Uterus (tissue), 4 donors: ENCODE measurements at regions of chr16 and their contacts with region 1.

Region 1: GRCh38 chr16:27748868-27749546 is 199.1 kb downstream of the KATNIP start:
- DNase-seq: peak; percentile 30 to 42
- H3K4me3 ChIP-seq: no peak overlapping the region
- H3K27ac ChIP-seq: no peak overlapping the region
- H3K4me1 ChIP-seq: no peaks in the 10 kb centered on the region
- H3K27me3 ChIP-seq: no peaks in the 10 kb centered on the region
- CTCF ChIP-seq: peak in 3 of 4 experiments; percentile 5 to 26 (median 19)
- POLR2A ChIP-seq: no peak

Region 2: DNA sequence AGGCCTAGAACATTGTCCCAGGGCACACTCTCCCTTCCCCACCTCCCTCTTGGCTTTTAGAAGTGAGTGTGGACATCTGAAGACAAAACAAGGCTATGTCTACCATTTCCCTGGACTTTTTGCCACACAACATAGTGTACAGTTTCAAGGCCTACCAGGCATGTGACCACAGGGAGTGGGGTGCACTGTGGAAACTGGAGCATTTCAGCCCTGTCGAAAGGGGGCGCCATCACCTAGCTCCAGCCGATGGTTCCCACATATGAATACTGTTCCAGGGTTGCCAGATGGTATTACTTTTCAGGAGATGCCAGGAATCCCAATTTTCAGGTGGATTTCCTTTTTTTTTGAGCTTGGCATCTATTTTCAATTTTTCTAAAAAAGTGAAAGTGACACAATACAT is 58.4 kb before region 1 on chr16:
- intact Hi-C with region 1: loop called (anchors 10 kb)
- DNase-seq: no peak
- H3K4me3 ChIP-seq: no peak overlapping the region
- H3K27ac ChIP-seq: no peak overlapping the region
- H3K4me1 ChIP-seq: no peaks in the 10 kb centered on the region
- H3K27me3 ChIP-seq: no peaks in the 10 kb centered on the region
- CTCF ChIP-seq: peak in 2 of 4 experiments; percentile 12 to 20
- POLR2A ChIP-seq: no peak

Region 3: DNA sequence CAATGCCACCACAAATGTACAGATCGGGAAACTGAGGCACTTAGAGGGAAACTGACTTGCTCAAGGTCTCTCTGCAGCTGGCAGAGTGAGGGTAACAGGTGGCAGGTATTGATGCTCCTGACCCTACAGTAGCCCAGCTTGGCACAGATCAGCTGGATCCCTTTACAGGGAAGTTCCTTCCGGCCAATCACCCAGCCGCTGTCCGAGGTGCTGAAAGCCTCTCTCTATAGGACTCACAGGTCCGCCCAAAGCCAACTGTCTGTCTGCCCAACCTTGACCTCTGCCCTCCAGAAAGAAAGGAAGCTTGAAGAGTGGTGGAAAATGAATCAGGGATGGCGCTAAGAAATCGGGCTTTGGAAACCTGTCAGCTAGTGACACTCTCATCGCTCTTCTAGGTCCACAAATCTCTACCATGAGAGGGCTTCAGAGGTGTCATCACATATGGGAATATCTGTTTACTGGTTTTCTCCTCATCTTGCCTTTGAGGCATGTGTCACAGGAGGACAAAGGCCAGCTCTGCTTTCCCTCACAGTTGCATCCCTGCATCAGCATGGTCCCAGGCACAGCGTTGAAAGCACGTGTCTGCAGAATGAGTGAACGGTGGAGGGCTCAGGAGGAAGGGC is 47.1 kb after region 1 on chr16:
- intact Hi-C with region 1: no loop called
- DNase-seq: no peak
- H3K4me3 ChIP-seq: no peak overlapping the region
- H3K27ac ChIP-seq: no peak overlapping the region
- H3K4me1 ChIP-seq: no peaks in the 10 kb centered on the region
- H3K27me3 ChIP-seq: no peaks in the 10 kb centered on the region
- CTCF ChIP-seq: no peak
- POLR2A ChIP-seq: no peak